Adrenal gland (tissue), 19 donors: ENCODE measurements at regions of chr19 and their contacts with region 1.

Region 1: GRCh38 chr19:21147540-21147939 is 5.7 kb downstream of the ZNF431 start:
- DNase-seq: no peak
- H3K4me3 ChIP-seq: no peak overlapping the region
- H3K27ac ChIP-seq: no peak overlapping the region
- H3K4me1 ChIP-seq: peaks cover 0 to 28% of the 10 kb centered on the region in 2 donors
- H3K27me3 ChIP-seq: no peaks in the 10 kb centered on the region
- CTCF ChIP-seq: no peak
- POLR2A ChIP-seq: no peak

Region 2: GRCh38 chr19:21082011-21082975 is 65.2 kb before region 1 on chr19 and contains the start of gene ZNF714:
- intact Hi-C with region 1: loop called in 1 of 2 experiments (anchors 5 kb)
- DNase-seq: peak; percentile 90 to 98 (median 94)
- H3K4me3 ChIP-seq: peak within 1 kb of the TSS; percentile 45 to 69 (median 63)
- H3K27ac ChIP-seq: peak within 1 kb of the TSS in 4 of 5 donors; percentile 70 to 81 (median 76)
- H3K4me1 ChIP-seq: peaks cover 15 to 16% of the 10 kb centered on the region in 2 donors
- H3K27me3 ChIP-seq: no peaks in the 10 kb centered on the region
- CTCF ChIP-seq: no peak
- POLR2A ChIP-seq: peak; percentile 48 to 93
- total RNA-seq, gene ZNF714: 5.5 to 34.2 (median 24.6) TPM